GM12878 (cell line): ENCODE measurements at regions of chr7 and their contacts with region 1.

Region 1: GRCh38 chr7:41696314-41696916 is 6.5 kb downstream of the INHBA start:
- DNase-seq: no peak
- ATAC-seq: peak; percentile 62
- H3K4me3 ChIP-seq: no peak overlapping the region
- H3K27ac ChIP-seq: no peak overlapping the region
- H3K4me1 ChIP-seq: no peaks in the 10 kb centered on the region
- H3K27me3 ChIP-seq: 0 out of 4 replicates have a peak, but pooled peaks cover 0 to 2% of the 10 kb centered on the region in 2 experiments
- CTCF ChIP-seq: peak; percentile 53 to 66 (median 54)
- EP300 ChIP-seq: no peak
- POLR2A ChIP-seq: no peak
- RAD21 ChIP-seq: peak; percentile 66

Region 2: DNA sequence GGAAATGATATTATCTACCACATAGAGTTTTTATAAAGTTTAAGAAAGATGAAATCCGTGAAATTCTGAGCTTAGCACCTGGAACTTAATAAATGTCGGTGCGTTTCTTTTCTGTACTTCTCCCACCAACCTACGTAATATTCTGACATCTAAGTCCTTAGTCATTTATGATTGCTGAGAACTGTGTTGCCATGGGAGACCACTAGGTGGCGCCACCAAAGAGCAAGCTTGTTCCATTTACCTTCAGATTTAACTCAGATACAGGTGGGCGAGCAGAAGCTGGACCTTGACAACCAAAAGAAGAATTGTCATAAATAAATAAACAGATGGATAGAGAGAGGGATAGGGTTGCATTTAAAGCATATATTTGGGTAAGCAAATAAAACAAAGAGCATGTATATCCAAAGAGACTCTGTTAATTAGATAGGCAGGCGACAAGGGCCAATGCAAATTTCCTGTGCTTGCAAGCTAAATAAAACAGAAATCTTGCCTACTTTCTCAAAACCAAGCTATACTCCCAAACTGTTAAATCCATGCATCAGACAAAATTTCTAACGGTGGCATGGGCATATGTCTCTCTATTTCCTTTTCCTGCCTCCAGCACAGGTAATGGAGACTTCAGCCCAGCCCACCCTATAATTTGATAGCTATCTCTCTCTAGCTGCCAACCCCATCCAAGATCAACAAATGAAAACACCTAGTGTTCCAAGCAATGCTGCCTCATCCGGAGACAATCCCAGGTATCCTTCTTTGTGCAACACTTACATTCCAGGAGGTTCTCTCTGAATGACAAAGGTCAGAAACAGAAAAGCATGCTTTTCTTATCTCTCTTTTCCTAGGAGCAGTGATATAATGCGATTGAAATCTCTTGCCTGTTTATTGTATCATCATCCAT is 693.1 kb before region 1 on chr7:
- CTCF ChIA-PET with region 1: interaction called, 19 read pairs
- POLR2A ChIA-PET with region 1: no interaction called
- RAD21 ChIA-PET with region 1: no interaction called
- SMC1A ChIA-PET with region 1: interaction called, 3 read pairs
- in situ Hi-C with region 1: loop called (anchors 10 kb)
- intact Hi-C with region 1: loop called (anchors 5 kb)
- DNase-seq: peak; percentile 3
- ATAC-seq: peak; percentile 67
- H3K4me3 ChIP-seq: no peak overlapping the region
- H3K27ac ChIP-seq: no peak overlapping the region
- H3K4me1 ChIP-seq: no peaks in the 10 kb centered on the region
- H3K27me3 ChIP-seq: no peaks in the 10 kb centered on the region; a peak in 1 of 4 replicates
- CTCF ChIP-seq: peak; percentile 69 to 76 (median 71); a peak in 5 of 6 replicates
- EP300 ChIP-seq: no peak
- POLR2A ChIP-seq: no peak
- RAD21 ChIP-seq: peak; percentile 79

Region 3: GRCh38 chr7:41134300-41135250 is 561.8 kb before region 1 on chr7:
- CTCF ChIA-PET with region 1: no interaction called
- POLR2A ChIA-PET with region 1: no interaction called
- RAD21 ChIA-PET with region 1: no interaction called
- SMC1A ChIA-PET with region 1: no interaction called
- in situ Hi-C with region 1: no loop called
- intact Hi-C with region 1: loop called (anchors 10 kb)
- DNase-seq: peak; percentile 64
- ATAC-seq: peak; percentile 92
- H3K4me3 ChIP-seq: no peak overlapping the region
- H3K27ac ChIP-seq: peak overlapping the region; percentile 56; the same call in 1 of the 2 replicates
- H3K4me1 ChIP-seq: no peaks in the 10 kb centered on the region
- H3K27me3 ChIP-seq: no peaks in the 10 kb centered on the region
- CTCF ChIP-seq: no peak
- EP300 ChIP-seq: peak; percentile 49 to 63; a peak in 1 of 4 replicates
- POLR2A ChIP-seq: no peak
- RAD21 ChIP-seq: no peak

Region 4: DNA sequence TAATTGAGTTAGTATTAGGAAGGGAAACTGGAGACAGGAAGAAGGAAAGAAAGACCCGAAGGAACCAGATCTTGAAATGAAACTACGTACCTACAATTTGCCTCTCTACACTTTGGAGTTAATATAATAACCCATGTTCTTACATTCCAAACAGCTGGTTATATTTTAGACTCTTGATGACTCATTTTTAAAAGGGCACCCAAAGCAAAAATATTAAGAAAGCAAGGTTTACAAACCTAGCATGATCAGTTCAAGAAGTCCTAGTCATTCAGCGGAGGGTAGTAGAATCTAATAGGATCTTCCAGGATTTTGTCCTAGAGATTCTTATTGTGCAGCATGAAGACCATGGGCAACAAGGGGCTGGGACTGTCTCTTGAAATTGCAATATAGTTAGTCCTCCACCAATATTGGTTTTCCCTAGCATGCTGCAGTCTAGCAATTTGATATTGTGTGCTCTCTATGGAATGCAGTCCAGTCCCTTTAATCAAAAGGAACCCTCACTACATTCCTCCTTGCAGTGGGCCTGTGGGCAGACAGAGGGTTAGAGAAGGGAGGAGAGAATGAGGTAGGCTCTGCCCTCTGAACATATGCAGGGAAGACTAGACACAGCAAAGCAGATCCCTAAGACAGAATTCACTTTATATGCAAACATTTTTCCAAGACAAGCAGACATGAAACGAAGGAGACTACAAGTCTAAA is 223.8 kb before region 1 on chr7:
- CTCF ChIA-PET with region 1: no interaction called
- POLR2A ChIA-PET with region 1: no interaction called
- RAD21 ChIA-PET with region 1: no interaction called
- SMC1A ChIA-PET with region 1: interaction called, 3 read pairs
- in situ Hi-C with region 1: no loop called
- intact Hi-C with region 1: loop called (anchors 10 kb)
- DNase-seq: no peak
- ATAC-seq: no peak
- H3K4me3 ChIP-seq: no peak overlapping the region
- H3K27ac ChIP-seq: no peak overlapping the region
- H3K4me1 ChIP-seq: no peaks in the 10 kb centered on the region; the same call in 1 of the 2 replicates
- H3K27me3 ChIP-seq: no peaks in the 10 kb centered on the region
- CTCF ChIP-seq: no peak
- EP300 ChIP-seq: no peak
- POLR2A ChIP-seq: no peak
- RAD21 ChIP-seq: no peak

Region 5: GRCh38 chr7:41674505-41675023 is 21.9 kb before region 1 on chr7:
- CTCF ChIA-PET with region 1: no interaction called
- POLR2A ChIA-PET with region 1: no interaction called
- RAD21 ChIA-PET with region 1: no interaction called
- SMC1A ChIA-PET with region 1: no interaction called
- in situ Hi-C with region 1: no loop called
- intact Hi-C with region 1: no loop called
- DNase-seq: no peak
- ATAC-seq: no peak
- H3K4me3 ChIP-seq: no peak overlapping the region
- H3K27ac ChIP-seq: no peak overlapping the region
- H3K4me1 ChIP-seq: no peaks in the 10 kb centered on the region
- H3K27me3 ChIP-seq: no peaks in the 10 kb centered on the region
- CTCF ChIP-seq: no peak
- EP300 ChIP-seq: no peak
- POLR2A ChIP-seq: no peak
- RAD21 ChIP-seq: no peak

Region 6: GRCh38 chr7:41711283-41712064 is 15.1 kb after region 1 on chr7:
- CTCF ChIA-PET with region 1: interaction called, 56 read pairs
- POLR2A ChIA-PET with region 1: no interaction called
- RAD21 ChIA-PET with region 1: no interaction called
- SMC1A ChIA-PET with region 1: interaction called, 12 read pairs
- in situ Hi-C with region 1: no loop called
- intact Hi-C with region 1: no loop called
- DNase-seq: no peak
- ATAC-seq: peak; percentile 53
- H3K4me3 ChIP-seq: no peak overlapping the region
- H3K27ac ChIP-seq: no peak overlapping the region
- H3K4me1 ChIP-seq: no peaks in the 10 kb centered on the region; the same call in 1 of the 2 replicates
- H3K27me3 ChIP-seq: no peaks in the 10 kb centered on the region
- CTCF ChIP-seq: peak in 2 of 3 experiments; percentile 25 to 33; a peak in 4 of 6 replicates
- EP300 ChIP-seq: no peak
- POLR2A ChIP-seq: no peak
- RAD21 ChIP-seq: peak; percentile 23; the same call in 1 of the 2 replicates